Right ventricle myocardium superior (tissue), 1 donor: ENCODE measurements at regions of chr3 and their contacts with region 1.

Region 1: GRCh38 chr3:24963762-24964625 is 464.1 kb upstream of the RARB start:
- DNase-seq: no peak
- ATAC-seq: peak; percentile 48

Region 2: DNA sequence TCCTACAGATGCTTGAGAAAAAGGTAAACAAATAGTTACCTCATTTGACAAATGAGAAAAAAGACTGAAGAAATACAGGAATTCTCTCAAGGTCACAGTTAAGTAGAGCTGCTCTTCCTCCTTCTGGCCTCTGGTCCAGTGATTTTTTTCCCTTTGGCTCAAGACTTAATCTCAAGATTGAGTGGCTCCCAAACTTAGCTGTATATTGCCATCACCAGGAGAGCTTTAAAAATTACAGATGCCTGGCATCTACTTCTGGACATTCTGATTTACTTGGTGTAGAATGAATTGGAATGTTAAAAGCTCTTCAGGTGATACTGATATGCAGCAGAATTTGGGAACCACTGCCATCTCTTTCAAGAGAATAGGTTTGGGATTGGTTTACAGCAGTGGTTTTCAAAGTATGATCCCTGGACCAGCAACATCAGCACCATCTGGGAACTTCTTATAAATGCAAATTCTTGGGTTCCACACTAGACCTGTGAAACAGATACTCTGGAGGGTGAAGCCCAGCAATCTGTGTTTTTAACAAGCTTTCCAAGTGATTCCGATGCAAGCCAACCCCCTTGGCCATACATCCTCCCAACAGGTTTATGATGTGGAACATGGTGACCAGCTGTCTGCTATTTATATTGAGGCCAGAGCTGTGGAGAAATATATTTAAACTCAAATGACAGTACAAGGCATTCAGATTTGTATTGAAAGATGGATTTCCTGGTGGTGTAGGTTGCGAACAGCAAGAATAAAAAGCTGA is 131.1 kb after region 1 on chr3:
- intact Hi-C with region 1: loop called (anchors 10 kb)
- DNase-seq: no peak
- ATAC-seq: no peak